PC-9 (cell line): ENCODE measurements at regions of chr14 and their contacts with region 1.

Region 1: DNA sequence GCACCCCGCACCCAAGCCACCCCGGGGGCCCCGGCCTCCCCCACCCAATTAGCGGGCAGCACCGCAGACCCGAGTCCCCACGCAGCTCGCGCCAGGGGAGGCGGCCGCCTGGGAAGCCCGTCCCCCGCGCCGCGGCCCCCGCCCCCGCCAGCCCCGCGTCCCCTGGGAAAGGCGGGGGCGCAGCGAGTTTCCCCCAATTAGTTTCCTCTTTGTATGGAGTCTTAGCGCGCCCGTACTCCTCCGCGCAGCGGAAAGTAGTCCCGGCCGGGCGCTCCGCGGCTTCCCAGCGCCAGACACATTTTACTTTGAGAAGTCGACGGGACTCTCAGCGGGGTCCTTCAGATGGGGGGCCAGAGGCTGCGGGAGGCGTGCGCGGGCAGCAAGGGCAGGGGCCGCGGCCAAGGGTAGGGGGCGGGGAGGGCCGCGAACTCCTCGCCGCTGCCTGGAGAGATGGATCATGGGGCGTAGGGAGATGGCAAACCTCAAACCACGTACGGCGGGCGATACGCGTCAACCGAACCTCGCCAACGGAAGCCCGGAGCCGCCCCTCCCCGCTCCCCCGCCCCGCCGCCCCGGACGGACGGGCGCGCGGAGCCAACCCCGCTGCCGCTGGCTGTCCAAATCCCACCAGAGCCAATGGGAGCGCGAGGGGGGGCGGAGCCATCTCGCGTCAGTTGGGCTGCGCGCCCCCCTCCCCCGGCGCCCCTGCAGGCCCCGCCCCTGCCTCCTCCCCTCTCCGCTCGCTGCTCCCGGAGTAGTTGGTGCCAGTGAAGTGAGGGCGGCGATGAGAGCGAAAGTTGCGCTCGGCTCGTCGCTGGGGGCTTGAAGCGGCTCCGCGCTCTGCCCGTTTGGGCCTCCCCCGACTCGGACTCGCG is at the start of gene RCOR1:
- DNase-seq: peak; percentile 93 to 100
- H3K4me3 ChIP-seq: peak within 1 kb of the TSS; percentile 90
- H3K27ac ChIP-seq: peak within 1 kb of the TSS; percentile 96
- H3K4me1 ChIP-seq: peaks cover 35% of the 10 kb centered on the region
- H3K27me3 ChIP-seq: no peaks in the 10 kb centered on the region
- CTCF ChIP-seq: no peak
- total RNA-seq, gene RCOR1: 54.2 and 67.2 TPM in 2 replicates

Region 2: DNA sequence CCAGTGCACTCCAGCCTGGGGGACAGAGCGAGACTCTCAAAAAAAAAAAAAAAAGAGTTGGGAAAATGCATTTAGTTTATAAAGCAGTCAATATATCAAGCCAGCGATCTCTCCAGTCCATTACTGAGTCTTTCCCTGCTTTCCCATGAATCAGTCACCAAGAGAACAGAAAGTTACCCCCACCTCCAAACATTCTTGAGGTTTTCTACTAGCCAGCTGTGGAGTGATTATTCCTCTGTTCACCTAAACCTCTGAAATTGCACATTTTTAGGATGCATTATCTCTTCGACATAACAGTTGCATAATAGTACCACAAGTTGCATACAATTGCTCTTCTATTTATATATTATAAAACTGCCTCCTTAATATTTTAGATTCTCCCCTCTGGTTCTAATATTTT is 1165.7 kb before region 1 on chr14:
- CTCF ChIA-PET with region 1: no interaction called
- POLR2A ChIA-PET with region 1: no interaction called
- intact Hi-C with region 1: no loop called
- DNase-seq: no peak
- H3K4me3 ChIP-seq: no peak overlapping the region
- H3K27ac ChIP-seq: no peak overlapping the region
- H3K4me1 ChIP-seq: no peaks in the 10 kb centered on the region
- H3K27me3 ChIP-seq: no peaks in the 10 kb centered on the region
- CTCF ChIP-seq: no peak

Region 3: DNA sequence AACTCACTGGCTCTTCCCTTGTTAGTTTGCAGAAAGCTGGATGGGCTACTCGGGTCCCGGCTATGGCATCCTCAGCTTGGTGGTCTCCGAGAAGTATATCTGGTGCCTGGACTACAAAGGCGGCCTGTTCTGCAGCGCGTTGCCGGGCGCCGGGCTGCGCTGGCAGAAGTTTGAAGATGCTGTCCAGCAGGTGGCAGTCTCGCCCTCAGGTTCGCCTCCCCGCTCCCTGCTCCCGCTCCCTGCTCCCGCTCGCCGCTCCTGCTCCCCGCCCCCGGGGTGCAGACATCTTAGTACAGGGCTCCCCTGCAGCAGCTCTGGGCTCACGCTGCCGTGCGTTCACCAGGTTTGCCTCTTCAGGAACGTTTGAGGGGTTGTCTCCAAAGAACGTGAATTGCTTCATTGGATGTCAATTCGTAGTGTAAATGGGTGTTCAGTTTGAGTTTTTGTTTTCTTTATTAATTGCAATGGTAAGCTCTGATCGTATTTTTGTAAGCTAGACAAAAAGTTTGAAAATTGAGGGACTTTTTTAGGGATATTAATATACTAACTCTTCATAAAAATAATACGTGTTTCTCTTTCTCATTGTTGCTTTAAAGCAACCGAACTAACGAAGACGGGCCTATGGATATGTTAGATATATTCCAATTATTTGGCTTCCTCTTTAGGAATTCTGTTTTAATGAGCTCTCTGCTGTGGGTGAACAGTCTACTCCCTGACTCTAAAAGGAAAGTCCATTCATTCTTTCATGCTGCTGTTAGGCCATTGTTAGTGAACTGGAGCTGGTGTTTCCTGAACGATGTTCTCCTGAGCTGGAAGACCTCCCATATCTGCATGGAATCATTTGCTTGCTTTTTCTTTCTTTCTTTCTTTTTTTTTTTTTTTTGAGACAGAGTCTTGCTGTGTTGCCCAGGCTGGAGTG is 153.9 kb before region 1 on chr14:
- CTCF ChIA-PET with region 1: interaction called, 6 read pairs
- POLR2A ChIA-PET with region 1: no interaction called
- intact Hi-C with region 1: loop called (anchors 1 kb)
- DNase-seq: peak; percentile 68 to 90
- H3K4me3 ChIP-seq: no peak overlapping the region
- H3K27ac ChIP-seq: no peak overlapping the region
- H3K4me1 ChIP-seq: peaks cover 33% of the 10 kb centered on the region
- H3K27me3 ChIP-seq: no peaks in the 10 kb centered on the region
- CTCF ChIP-seq: peak; percentile 98

Region 4: GRCh38 chr14:102555264-102555831 is 36.8 kb before region 1 on chr14:
- CTCF ChIA-PET with region 1: no interaction called
- POLR2A ChIA-PET with region 1: no interaction called
- intact Hi-C with region 1: loop called (anchors 1 kb)
- DNase-seq: no peak
- H3K4me3 ChIP-seq: no peak overlapping the region
- H3K27ac ChIP-seq: no peak overlapping the region
- H3K4me1 ChIP-seq: peaks cover 31% of the 10 kb centered on the region
- H3K27me3 ChIP-seq: no peaks in the 10 kb centered on the region
- CTCF ChIP-seq: no peak

Region 5: GRCh38 chr14:102655170-102655569 is 63.0 kb after region 1 on chr14:
- CTCF ChIA-PET with region 1: interaction called, 22 read pairs
- POLR2A ChIA-PET with region 1: no interaction called
- intact Hi-C with region 1: no loop called
- DNase-seq: peak; percentile 25 to 85
- H3K4me3 ChIP-seq: no peak overlapping the region
- H3K27ac ChIP-seq: peak overlapping the region; percentile 49
- H3K4me1 ChIP-seq: peaks cover 30% of the 10 kb centered on the region
- H3K27me3 ChIP-seq: no peaks in the 10 kb centered on the region
- CTCF ChIP-seq: no peak

Region 6: DNA sequence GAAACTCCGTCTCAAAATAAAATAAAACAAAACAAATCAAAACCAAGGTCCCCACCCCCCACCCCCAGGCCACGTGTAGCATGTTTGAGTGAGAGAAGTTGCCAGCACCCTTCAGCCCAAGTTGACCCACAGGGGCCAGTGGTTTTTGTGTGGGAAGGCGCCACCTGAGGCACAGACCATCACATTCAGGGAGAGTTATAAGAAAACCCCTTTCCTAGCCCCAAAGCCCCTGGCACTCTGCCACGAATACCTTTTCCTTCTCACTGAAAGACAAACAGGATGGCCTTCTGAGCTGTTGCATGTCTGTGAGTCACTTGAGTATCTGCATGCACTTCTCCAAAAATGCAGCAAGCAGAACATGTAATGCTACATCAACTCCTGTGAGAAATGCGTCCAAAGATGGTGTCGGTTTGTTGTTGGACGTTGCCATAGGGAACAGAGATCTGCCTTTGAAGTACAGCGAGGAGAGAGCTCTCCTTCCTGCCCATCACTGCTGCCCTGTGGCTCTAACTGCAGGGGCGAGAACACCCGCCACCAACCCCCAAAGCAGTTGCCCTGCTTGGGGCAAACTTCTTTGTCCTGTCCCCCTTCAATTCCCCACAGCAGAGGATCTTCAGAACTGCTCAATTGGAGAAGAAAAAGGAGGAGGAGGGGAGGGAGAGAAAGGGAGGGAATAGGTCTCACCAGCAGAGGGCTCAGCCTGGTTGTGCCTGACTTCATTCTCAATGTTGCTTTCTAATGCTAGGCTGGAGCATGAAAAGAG is 182.4 kb after region 1 on chr14:
- CTCF ChIA-PET with region 1: interaction called, 4 read pairs
- POLR2A ChIA-PET with region 1: interaction called, 10 read pairs
- intact Hi-C with region 1: no loop called
- DNase-seq: peak; percentile 67 to 70
- H3K4me3 ChIP-seq: no peak overlapping the region
- H3K27ac ChIP-seq: no peak overlapping the region
- H3K4me1 ChIP-seq: peaks cover 16% of the 10 kb centered on the region
- H3K27me3 ChIP-seq: no peaks in the 10 kb centered on the region
- CTCF ChIP-seq: peak; percentile 87

Region 7: DNA sequence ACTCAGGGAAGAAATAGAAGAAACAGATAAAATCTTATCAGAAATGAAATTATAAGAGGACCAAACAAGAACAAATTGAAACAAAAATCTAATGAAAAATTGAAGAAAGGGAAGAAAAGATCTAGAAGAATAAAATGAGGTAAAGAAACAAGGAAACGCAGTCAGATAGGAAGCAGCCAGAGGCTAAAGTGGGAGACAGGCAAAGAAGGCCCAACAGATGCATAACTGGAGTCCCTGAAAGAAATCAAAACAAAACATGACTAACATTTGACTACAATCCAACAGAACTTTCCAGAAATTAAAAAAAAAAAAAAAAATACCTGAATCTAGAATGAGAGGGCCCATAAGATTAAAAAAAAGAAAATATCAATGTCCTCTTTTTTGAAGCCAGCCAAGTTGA is 395.9 kb after region 1 on chr14:
- CTCF ChIA-PET with region 1: no interaction called
- POLR2A ChIA-PET with region 1: interaction called, 14 read pairs
- intact Hi-C with region 1: no loop called
- DNase-seq: no peak
- H3K4me3 ChIP-seq: no peak overlapping the region
- H3K27ac ChIP-seq: no peak overlapping the region
- H3K4me1 ChIP-seq: peaks cover 4% of the 10 kb centered on the region
- H3K27me3 ChIP-seq: no peaks in the 10 kb centered on the region
- CTCF ChIP-seq: no peak